GM10248 (cell line): ENCODE measurements at regions of chr13 and their contacts with region 1.

Region 1: GRCh38 chr13:59391696-59392095 is 772.0 kb downstream of the DIAPH3 start:
- DNase-seq: peak; percentile 58
- CTCF ChIP-seq: peak; percentile 80

Region 2: GRCh38 chr13:59166174-59166573 is 225.5 kb before region 1 on chr13:
- CTCF ChIA-PET with region 1: no interaction called
- POLR2A ChIA-PET with region 1: no interaction called
- DNase-seq: no peak
- CTCF ChIP-seq: no peak

Region 3: DNA sequence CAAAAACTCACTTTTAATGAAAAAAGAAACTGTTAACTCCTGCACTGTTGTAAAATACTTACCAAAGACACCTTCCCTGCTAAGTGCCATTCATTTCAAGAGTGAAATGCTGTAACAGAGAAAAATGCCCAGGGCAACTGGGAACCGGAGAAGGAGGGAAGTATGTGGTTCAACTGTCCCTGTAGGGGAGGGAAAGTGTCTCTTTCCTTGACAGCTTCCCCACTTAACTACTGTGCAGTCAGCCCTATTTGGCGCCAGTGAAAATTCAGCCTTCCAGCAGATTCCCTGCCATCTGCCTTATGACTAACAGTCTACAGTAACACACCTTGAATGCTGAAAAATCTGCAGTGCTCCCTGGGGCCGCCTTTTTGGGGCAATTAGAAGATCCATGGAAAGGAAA is 17.0 kb before region 1 on chr13:
- CTCF ChIA-PET with region 1: interaction called, 19 read pairs
- POLR2A ChIA-PET with region 1: no interaction called
- DNase-seq: no peak
- CTCF ChIP-seq: no peak

Region 4: DNA sequence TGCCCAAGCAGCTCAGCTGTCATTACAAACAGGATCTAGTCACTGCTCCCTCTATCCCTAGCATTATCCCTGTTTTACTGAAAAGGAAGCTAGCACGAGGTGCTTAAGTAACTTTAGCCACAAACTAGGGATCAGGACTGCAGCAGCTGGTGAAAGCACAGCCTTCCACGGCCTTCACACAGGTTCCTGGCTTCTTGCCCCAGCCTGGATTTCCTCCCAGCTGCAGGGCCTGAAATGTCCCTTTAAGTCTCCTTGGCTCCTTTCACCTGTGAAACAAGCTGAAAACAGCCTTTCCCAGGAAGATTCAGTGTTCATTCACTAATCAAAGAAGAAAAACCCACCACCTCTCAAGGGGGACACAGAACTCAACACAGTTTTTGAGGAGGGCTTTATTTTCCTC is 17.5 kb after region 1 on chr13:
- CTCF ChIA-PET with region 1: interaction called, 13 read pairs
- POLR2A ChIA-PET with region 1: no interaction called
- DNase-seq: no peak
- CTCF ChIP-seq: no peak

Region 5: DNA sequence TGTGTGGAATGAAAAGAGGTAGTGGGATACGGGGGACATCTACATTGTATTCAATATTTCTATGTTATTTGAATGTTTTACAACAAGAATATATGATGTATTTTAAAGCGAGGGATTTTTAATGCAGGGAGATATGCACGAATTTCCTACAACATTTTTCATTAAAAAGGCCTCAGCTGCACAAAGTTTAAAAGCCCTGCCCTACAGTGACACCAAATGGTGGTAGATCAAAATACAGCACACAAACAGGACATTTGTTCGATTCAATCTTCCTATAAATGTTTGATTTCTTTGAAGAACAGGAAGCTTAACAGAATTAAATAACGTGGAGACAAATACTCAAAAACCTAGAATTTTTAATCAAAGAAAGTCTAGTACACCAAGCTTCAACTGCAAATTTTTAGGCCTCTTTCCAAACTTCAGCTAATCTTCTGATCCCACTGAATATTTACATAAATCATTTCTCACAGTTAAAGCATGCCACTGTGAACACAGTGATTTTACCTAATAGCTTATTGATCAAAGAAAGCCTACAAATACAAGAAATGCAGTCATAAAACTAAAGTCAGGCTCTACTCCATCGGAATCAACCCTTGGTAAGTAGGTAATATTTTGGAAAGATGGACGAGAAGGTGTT is 514.8 kb after region 1 on chr13:
- CTCF ChIA-PET with region 1: interaction called, 21 read pairs
- POLR2A ChIA-PET with region 1: no interaction called
- DNase-seq: no peak
- CTCF ChIP-seq: peak; percentile 53

Region 6: GRCh38 chr13:60431108-60431700 is 1039.5 kb after region 1 on chr13:
- CTCF ChIA-PET with region 1: interaction called, 11 read pairs
- POLR2A ChIA-PET with region 1: no interaction called
- DNase-seq: peak; percentile 25
- CTCF ChIP-seq: peak; percentile 78